PC-9 (cell line): ENCODE measurements at regions of chr14 and their contacts with region 1.

Region 1: GRCh38 chr14:103500148-103500990 is 22.3 kb downstream of the CKB start:
- DNase-seq: peak; percentile 64 to 90
- H3K4me3 ChIP-seq: no peak overlapping the region
- H3K27ac ChIP-seq: no peak overlapping the region
- H3K4me1 ChIP-seq: no peaks in the 10 kb centered on the region
- H3K27me3 ChIP-seq: no peaks in the 10 kb centered on the region
- CTCF ChIP-seq: peak; percentile 100

Region 2: GRCh38 chr14:103546652-103547454 is 46.5 kb after region 1 on chr14:
- CTCF ChIA-PET with region 1: no interaction called
- POLR2A ChIA-PET with region 1: no interaction called
- intact Hi-C with region 1: loop called (anchors 1 kb)
- DNase-seq: peak; percentile 72 to 89
- H3K4me3 ChIP-seq: no peak overlapping the region
- H3K27ac ChIP-seq: no peak overlapping the region
- H3K4me1 ChIP-seq: peaks cover 23% of the 10 kb centered on the region
- H3K27me3 ChIP-seq: no peaks in the 10 kb centered on the region
- CTCF ChIP-seq: peak; percentile 100

Region 3: DNA sequence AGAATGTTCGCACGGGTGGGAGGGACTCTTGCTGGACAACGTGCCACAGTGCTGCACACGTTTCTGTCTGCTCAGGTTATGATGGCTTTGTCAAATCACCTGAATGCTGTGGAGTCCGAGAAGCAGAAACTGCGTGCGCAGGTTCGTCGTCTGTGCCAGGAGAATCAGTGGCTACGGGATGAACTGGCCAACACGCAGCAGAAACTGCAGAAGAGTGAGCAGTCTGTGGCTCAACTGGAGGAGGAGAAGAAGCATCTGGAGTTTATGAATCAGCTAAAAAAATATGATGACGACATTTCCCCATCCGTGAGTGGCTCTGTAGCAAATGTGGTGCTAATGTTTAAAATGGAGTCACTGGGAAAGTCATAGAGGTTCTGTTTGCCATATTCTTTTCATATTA is 157.1 kb after region 1 on chr14:
- CTCF ChIA-PET with region 1: no interaction called
- POLR2A ChIA-PET with region 1: no interaction called
- intact Hi-C with region 1: loop called (anchors 10 kb)
- DNase-seq: no peak
- H3K4me3 ChIP-seq: no peak overlapping the region
- H3K27ac ChIP-seq: no peak overlapping the region
- H3K4me1 ChIP-seq: peaks cover 11% of the 10 kb centered on the region
- H3K27me3 ChIP-seq: no peaks in the 10 kb centered on the region
- CTCF ChIP-seq: no peak